ENCODE measurements at regions of chr2 and their contacts with region 1.

Region 1: GRCh38 chr2:187459256-187459655 is 11.2 kb upstream of the CALCRL start:
- DNase-seq: no peak
- ATAC-seq: peak; percentile 58

Region 2: GRCh38 chr2:186991766-186992417 is 467.4 kb before region 1 on chr2:
- intact Hi-C with region 1: loop called (anchors 5 kb)
- DNase-seq: no peak
- ATAC-seq: peak; percentile 59